Common myeloid progenitor, CD34-positive (primary cell): ENCODE measurements at regions of chr20 and their contacts with region 1.

Region 1: DNA sequence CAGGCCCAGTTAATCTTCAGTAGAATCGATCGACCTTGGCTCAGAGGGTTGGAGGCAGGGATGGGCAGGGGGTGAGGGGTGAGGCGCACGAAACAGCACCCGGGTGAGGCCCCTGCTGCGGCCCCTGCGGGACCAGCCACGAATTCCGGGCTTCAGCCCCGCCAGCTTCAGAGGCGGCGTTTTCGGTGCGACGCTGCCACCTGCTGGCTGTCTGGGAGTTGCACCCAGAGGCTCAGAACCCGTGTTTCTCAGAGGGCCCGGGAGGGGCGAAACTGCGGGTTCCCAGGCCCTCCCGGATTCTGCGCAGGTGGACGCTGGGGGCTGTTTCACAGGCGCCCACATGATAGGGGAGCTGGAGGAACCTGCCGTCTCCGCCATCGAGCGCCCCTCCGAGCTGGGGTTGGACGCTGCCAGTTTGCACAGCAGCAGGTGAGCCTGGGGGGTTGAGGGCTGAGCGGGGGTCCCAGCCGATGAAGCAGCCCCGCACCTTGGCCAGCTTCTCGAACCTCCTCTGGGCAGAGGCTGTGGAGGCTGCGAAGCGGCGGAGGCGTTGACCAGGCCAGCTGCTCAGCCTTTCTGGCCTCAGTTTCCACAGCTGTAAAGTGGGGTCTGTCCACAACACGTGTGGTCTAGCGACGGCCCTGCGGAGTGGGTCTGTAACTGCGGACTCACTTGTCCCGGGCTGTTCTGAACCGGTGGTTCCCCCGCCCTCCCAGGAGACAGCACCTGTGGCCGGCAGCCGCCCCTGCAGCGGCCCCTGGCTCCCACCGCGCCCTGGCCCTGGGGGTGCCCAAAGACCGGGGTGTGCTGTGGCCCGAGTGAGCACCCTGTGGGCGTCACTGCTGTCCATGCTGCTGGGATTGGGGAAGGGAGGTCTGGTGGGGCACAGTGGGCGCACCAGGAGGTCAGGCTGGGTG is 2.5 kb upstream of the BHLHE23 start:
- DNase-seq: peak; percentile 77 to 87 (median 83)
- H3K4me3 ChIP-seq: peak overlapping the region in 3 of 7 experiments; percentile 40 to 60 (median 45)
- H3K27ac ChIP-seq: no peak overlapping the region
- H3K4me1 ChIP-seq: peaks cover 0 to 62% (median 43%) of the 10 kb centered on the region in 4 experiments
- H3K27me3 ChIP-seq: peaks cover 11 to 94% (median 46%) of the 10 kb centered on the region in 5 experiments

Region 2: DNA sequence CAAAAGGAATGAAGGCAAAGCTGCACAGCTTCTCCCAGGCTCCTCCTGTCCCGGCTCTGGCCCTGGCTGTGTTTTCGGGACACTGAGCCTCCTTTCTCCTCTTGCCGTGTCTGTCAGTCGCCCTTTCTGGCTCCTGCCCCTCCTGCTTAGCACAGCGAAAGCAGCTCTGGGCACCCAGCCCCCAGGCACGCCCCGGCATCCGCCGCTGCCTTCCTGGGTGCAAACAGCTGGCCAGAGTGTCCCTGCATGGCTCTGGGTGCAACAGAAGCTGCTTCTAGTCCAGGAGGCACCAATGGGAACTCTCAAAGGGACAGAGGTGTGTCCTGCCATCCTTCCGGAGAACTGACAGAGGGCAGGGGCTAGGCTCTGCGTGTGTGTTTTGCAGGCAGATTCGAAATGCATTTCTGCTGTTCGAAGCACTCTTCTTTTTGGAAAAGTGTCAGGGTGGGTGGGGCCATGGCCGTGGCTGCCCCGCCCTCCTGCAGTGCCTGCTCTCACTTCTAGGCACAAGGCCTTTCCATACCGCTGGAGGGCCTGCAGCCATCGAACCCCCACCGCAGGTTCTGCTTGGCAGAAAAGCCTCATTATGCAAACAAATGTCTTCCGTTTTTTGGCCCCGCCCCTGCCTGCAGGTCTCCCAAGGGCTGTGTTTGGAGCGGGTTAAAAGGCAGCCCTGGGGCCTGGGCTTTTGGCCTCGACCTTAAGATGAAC is 176.9 kb before region 1 on chr20:
- CTCF ChIA-PET with region 1: no interaction called
- POLR2A ChIA-PET with region 1: no interaction called
- DNase-seq: peak; percentile 61 to 89 (median 86)
- H3K4me3 ChIP-seq: peak overlapping the region in 4 of 7 experiments; percentile 4 to 37 (median 24)
- H3K27ac ChIP-seq: no peak overlapping the region
- H3K4me1 ChIP-seq: peaks cover 0 to 14% (median 14%) of the 10 kb centered on the region in 4 experiments
- H3K27me3 ChIP-seq: no peaks in the 10 kb centered on the region

Region 3: GRCh38 chr20:62900052-62900691 is 109.1 kb before region 1 on chr20:
- CTCF ChIA-PET with region 1: interaction called, 19 read pairs
- POLR2A ChIA-PET with region 1: no interaction called
- DNase-seq: peak; percentile 77 to 91 (median 89)
- H3K4me3 ChIP-seq: peak overlapping the region in 1 of 7 experiments; percentile 45
- H3K27ac ChIP-seq: no peak overlapping the region
- H3K4me1 ChIP-seq: peaks cover 0 to 15% (median 8%) of the 10 kb centered on the region in 4 experiments
- H3K27me3 ChIP-seq: no peaks in the 10 kb centered on the region

Region 4: GRCh38 chr20:62907384-62908317 is 101.7 kb before region 1 on chr20:
- CTCF ChIA-PET with region 1: interaction called, 19 read pairs
- POLR2A ChIA-PET with region 1: no interaction called
- DNase-seq: peak; percentile 59 to 71 (median 70)
- H3K4me3 ChIP-seq: no peak overlapping the region
- H3K27ac ChIP-seq: no peak overlapping the region
- H3K4me1 ChIP-seq: no peaks in the 10 kb centered on the region
- H3K27me3 ChIP-seq: no peaks in the 10 kb centered on the region

Region 5: GRCh38 chr20:62959101-62959971 is 50.0 kb before region 1 on chr20:
- CTCF ChIA-PET with region 1: interaction called, 15 read pairs
- POLR2A ChIA-PET with region 1: no interaction called
- DNase-seq: peak in 2 of 3 donors; percentile 90 to 92
- H3K4me3 ChIP-seq: peak overlapping the region in 1 of 7 experiments; percentile 19
- H3K27ac ChIP-seq: no peak overlapping the region
- H3K4me1 ChIP-seq: peaks cover 0 to 75% (median 63%) of the 10 kb centered on the region in 4 experiments
- H3K27me3 ChIP-seq: no peaks in the 10 kb centered on the region

Region 6: GRCh38 chr20:62972270-62973032 is 36.9 kb before region 1 on chr20:
- CTCF ChIA-PET with region 1: no interaction called
- POLR2A ChIA-PET with region 1: interaction called, 24 read pairs
- DNase-seq: peak; percentile 85 to 91 (median 91)
- H3K4me3 ChIP-seq: peak overlapping the region in 2 of 7 experiments; percentile 4 to 40
- H3K27ac ChIP-seq: no peak overlapping the region
- H3K4me1 ChIP-seq: peaks cover 0 to 33% (median 15%) of the 10 kb centered on the region in 4 experiments
- H3K27me3 ChIP-seq: peaks cover 0 to 42% (median 20%) of the 10 kb centered on the region in 5 experiments

Region 7: DNA sequence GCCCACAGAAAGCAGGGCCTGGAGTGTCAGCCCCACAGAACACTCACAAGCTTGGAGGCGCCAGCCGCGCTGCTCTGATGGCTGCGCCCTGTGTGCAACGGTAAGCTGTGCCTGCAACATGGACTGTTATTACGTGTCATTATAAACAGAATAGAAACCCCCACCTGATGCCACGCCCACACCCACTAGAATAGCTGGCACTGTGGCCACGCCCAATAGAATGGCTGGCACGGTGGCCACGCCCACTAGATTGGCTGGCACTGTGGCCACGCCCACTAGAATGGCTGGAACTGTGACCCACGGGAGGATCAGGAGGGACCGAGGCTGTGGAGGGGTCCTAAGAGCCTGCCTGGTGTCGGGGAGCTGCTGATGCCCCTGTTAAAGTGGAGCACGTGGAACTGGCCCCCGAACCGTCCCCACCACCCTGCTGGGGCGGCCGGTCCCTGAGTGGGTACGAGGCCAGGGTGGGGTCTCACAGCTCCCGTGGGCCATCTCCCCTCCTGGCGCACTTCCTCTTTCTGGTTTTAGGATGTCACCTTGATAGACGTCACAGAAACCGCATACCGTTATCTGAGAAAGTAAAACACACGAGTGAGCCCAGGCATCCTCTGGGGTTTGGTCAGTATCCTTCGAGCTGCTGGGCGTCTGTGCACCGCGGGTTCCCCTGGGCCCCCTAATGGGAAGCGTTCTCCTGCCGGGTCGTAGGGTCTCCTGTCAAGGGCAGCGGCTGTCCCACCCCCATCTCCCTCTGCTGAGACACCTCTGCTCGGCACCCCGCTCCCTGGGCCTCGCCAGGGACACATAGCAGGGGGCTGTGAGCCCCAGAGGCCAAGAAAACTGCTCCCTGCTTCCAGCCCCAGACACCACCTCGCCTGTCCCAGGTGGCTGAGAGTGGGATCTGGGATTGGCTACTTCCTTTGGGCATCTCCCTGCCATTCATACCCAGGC is 31.4 kb before region 1 on chr20:
- CTCF ChIA-PET with region 1: no interaction called
- POLR2A ChIA-PET with region 1: interaction called, 24 read pairs
- DNase-seq: peak; percentile 87 to 98 (median 97)
- H3K4me3 ChIP-seq: peak overlapping the region in 3 of 7 experiments; percentile 14 to 37 (median 15)
- H3K27ac ChIP-seq: no peak overlapping the region
- H3K4me1 ChIP-seq: peaks cover 5 to 70% (median 60%) of the 10 kb centered on the region in 4 experiments
- H3K27me3 ChIP-seq: peaks cover 0 to 30% (median 19%) of the 10 kb centered on the region in 5 experiments